ENCODE measurements at regions of chr2 and their contacts with region 1.

Region 1: GRCh38 chr2:174634130-174635014 is 36.8 kb upstream of the WIPF1 start:
- DNase-seq: peak; percentile 67
- H3K4me3 Mint-ChIP-seq: peak overlapping the region; percentile 93
- H3K27ac Mint-ChIP-seq: peak overlapping the region; percentile 98
- H3K4me1 Mint-ChIP-seq: peaks cover 67% of the 10 kb centered on the region
- H3K27me3 Mint-ChIP-seq: no peaks in the 10 kb centered on the region

Region 2: GRCh38 chr2:174593574-174594203 is 40.7 kb before region 1 on chr2:
- CTCF ChIA-PET with region 1: interaction called, 26 read pairs
- DNase-seq: peak; percentile 83
- H3K4me3 Mint-ChIP-seq: peak overlapping the region; percentile 91
- H3K27ac Mint-ChIP-seq: peak overlapping the region; percentile 98
- H3K4me1 Mint-ChIP-seq: peaks cover 50% of the 10 kb centered on the region
- H3K27me3 Mint-ChIP-seq: no peaks in the 10 kb centered on the region

Region 3: DNA sequence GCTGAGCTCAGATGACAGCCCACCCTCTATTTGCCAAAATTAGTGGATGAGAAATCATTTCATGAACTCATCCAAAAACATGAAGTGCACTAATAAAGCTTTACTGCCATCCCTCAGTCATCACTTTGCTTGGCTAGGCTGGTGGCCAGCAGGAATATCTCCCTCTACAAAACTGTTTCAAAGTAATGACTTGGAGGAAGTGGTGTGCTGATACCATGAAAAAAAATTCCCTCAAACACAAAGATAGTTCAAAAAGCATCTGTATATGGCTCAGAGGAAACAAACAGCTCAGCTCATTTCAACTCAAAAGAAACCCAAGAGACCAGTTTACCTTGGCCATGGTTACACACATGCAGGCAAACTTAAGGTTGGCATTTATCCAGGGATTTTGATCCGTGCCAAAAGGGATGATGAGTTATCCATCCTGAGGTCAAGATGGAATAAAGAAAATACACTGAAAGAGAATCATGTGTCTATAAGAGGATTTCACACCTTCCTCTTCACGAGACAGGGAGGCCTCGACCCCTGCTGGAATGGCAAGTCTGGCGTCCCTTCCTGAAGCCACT is 18.4 kb before region 1 on chr2:
- CTCF ChIA-PET with region 1: interaction called, 44 read pairs
- DNase-seq: no peak
- H3K4me3 Mint-ChIP-seq: no peak overlapping the region
- H3K27ac Mint-ChIP-seq: peak overlapping the region; percentile 87
- H3K4me1 Mint-ChIP-seq: peaks cover 93% of the 10 kb centered on the region
- H3K27me3 Mint-ChIP-seq: no peaks in the 10 kb centered on the region

Region 4: GRCh38 chr2:174682578-174683391 is 48.4 kb after region 1 on chr2:
- CTCF ChIA-PET with region 1: interaction called, 33 read pairs
- DNase-seq: peak; percentile 75
- H3K4me3 Mint-ChIP-seq: peak overlapping the region; percentile 89
- H3K27ac Mint-ChIP-seq: peak overlapping the region; percentile 88
- H3K4me1 Mint-ChIP-seq: peaks cover 54% of the 10 kb centered on the region
- H3K27me3 Mint-ChIP-seq: peaks cover 4% of the 10 kb centered on the region

Region 5: DNA sequence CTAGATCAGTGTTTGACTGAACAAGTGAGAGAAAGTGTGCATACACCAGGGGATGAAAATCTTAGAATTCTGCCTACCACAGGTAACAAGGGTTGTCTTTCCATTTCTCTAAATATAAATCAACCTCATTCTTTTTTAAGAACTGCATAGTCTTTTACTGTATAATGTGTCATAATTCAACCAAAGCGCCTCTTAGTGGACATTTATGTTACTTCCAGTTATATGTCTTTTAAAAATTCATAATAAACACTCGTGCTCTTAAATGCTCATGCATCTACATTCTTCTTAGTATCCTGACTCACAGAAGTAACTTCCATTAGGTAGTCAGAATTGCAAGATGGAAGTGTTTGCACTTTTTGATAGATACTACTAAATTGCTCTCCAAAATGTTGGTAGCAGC is 53.7 kb after region 1 on chr2:
- CTCF ChIA-PET with region 1: interaction called, 33 read pairs
- DNase-seq: no peak
- H3K4me3 Mint-ChIP-seq: no peak overlapping the region
- H3K27ac Mint-ChIP-seq: no peak overlapping the region
- H3K4me1 Mint-ChIP-seq: peaks cover 24% of the 10 kb centered on the region
- H3K27me3 Mint-ChIP-seq: peaks cover 19% of the 10 kb centered on the region

Region 6: GRCh38 chr2:175147186-175147585 is 512.8 kb after region 1 on chr2:
- CTCF ChIA-PET with region 1: no interaction called
- DNase-seq: no peak
- H3K4me3 Mint-ChIP-seq: no peak overlapping the region
- H3K27ac Mint-ChIP-seq: no peak overlapping the region
- H3K4me1 Mint-ChIP-seq: peaks cover 5% of the 10 kb centered on the region
- H3K27me3 Mint-ChIP-seq: no peaks in the 10 kb centered on the region

Measured in activated naive CD4-positive, alpha-beta T cell treated with anti-CD3 and anti-CD28 coated beads, Interleukin-2, amount 10 ng/mL, durations not matched to agents 7 days and 5 days (primary cell).